ENCODE measurements at regions of chr1 and their contacts with region 1.

Region 1: DNA sequence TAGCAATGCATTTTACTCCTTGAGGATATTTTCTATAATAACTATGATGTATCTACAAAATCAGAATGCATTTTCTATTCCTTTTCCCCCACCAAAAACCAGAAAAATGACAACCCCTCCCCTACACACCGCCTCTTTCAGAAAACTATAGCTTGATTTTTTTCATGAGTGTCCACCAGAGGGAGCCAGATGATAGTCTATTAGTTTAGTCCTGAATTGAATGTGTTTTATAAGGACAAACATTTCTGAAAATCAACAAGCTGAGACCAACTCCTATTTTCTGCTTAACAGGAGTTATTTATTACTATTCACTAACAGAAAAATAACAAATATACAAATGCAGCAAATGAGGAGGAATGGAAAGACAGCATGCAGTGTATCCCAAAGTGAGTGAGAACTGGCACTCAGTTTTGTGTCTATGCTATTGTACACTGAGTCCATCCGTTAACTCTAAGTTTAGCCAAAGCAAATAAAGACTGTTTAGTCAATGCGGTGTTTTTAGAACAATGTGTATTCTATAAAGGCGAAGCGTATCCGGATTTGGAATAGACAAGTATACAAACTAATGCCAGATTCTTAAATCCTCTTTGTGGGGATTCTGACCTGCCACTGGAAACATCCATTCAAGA is 182.6 kb downstream of the VAV3 start:
- DNase-seq: peak; percentile 26
- H3K4me3 ChIP-seq: no peak overlapping the region
- H3K27ac ChIP-seq: no peak overlapping the region
- H3K4me1 ChIP-seq: no peaks in the 10 kb centered on the region
- H3K27me3 ChIP-seq: no peaks in the 10 kb centered on the region
- CTCF ChIP-seq: peak; percentile 46 to 55

Region 2: DNA sequence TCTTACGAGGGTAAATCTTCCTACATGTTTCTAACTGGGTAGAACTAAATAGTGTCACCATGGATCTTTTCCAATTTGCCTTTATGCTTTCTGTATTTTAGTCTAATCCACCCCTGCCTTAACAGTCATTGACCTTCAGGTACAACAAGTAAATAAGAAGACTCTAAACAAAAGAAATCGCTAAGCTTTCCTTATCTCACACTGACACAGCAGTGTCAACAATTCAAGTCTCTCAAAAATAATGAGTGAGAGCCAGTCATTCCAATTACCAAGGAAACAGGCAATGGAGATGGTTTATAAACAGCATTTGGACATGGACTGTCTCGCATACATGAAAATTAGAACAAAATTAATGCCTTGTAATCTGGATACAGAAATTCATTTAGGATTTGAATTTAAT is 183.1 kb before region 1 on chr1:
- CTCF ChIA-PET with region 1: no interaction called
- dilution Hi-C with region 1: no loop called
- in situ Hi-C with region 1: no loop called
- intact Hi-C with region 1: no loop called
- DNase-seq: no peak
- H3K4me3 ChIP-seq: no peak overlapping the region
- H3K27ac ChIP-seq: no peak overlapping the region
- H3K4me1 ChIP-seq: no peaks in the 10 kb centered on the region
- H3K27me3 ChIP-seq: no peaks in the 10 kb centered on the region
- CTCF ChIP-seq: no peak

Region 3: GRCh38 chr1:107963601-107964335 is 181.4 kb after region 1 on chr1:
- CTCF ChIA-PET with region 1: interaction called, 4 read pairs
- dilution Hi-C with region 1: no loop called
- in situ Hi-C with region 1: no loop called
- intact Hi-C with region 1: loop called (anchors 5 kb)
- DNase-seq: peak; percentile 21
- H3K4me3 ChIP-seq: peak overlapping the region; percentile 13 to 59 (median 56)
- H3K27ac ChIP-seq: no peak overlapping the region
- H3K4me1 ChIP-seq: peaks cover 26% of the 10 kb centered on the region
- H3K27me3 ChIP-seq: no peaks in the 10 kb centered on the region
- CTCF ChIP-seq: no peak

Region 4: GRCh38 chr1:108049178-108049819 is 267.0 kb after region 1 on chr1:
- CTCF ChIA-PET with region 1: no interaction called
- dilution Hi-C with region 1: no loop called
- in situ Hi-C with region 1: no loop called
- intact Hi-C with region 1: loop called (anchors 5 kb)
- DNase-seq: peak; percentile 12
- H3K4me3 ChIP-seq: no peak overlapping the region
- H3K27ac ChIP-seq: no peak overlapping the region
- H3K4me1 ChIP-seq: peaks cover 33% of the 10 kb centered on the region
- H3K27me3 ChIP-seq: no peaks in the 10 kb centered on the region
- CTCF ChIP-seq: peak; percentile 46 to 62

Region 5: GRCh38 chr1:108125312-108126138 is 343.2 kb after region 1 on chr1:
- CTCF ChIA-PET with region 1: interaction called, 10 read pairs
- dilution Hi-C with region 1: loop called (anchors 5 kb)
- in situ Hi-C with region 1: loop called (anchors 5 kb)
- intact Hi-C with region 1: loop called (anchors 1 kb)
- DNase-seq: peak; percentile 51
- H3K4me3 ChIP-seq: no peak overlapping the region
- H3K27ac ChIP-seq: no peak overlapping the region
- H3K4me1 ChIP-seq: no peaks in the 10 kb centered on the region
- H3K27me3 ChIP-seq: no peaks in the 10 kb centered on the region
- CTCF ChIP-seq: peak; percentile 87 to 97

Region 6: GRCh38 chr1:108199781-108200570 is 417.6 kb after region 1 on chr1 and contains the start of gene SLC25A24:
- CTCF ChIA-PET with region 1: no interaction called
- dilution Hi-C with region 1: no loop called
- in situ Hi-C with region 1: no loop called
- intact Hi-C with region 1: loop called (anchors 5 kb)
- DNase-seq: peak; percentile 73
- H3K4me3 ChIP-seq: peak within 1 kb of the TSS; percentile 92 to 99 (median 93)
- H3K27ac ChIP-seq: peak within 1 kb of the TSS; percentile 70
- H3K4me1 ChIP-seq: peaks cover 19% of the 10 kb centered on the region
- H3K27me3 ChIP-seq: no peaks in the 10 kb centered on the region
- CTCF ChIP-seq: no peak
- total RNA-seq, gene SLC25A24: 47.6 to 60.7 TPM

Region 7: DNA sequence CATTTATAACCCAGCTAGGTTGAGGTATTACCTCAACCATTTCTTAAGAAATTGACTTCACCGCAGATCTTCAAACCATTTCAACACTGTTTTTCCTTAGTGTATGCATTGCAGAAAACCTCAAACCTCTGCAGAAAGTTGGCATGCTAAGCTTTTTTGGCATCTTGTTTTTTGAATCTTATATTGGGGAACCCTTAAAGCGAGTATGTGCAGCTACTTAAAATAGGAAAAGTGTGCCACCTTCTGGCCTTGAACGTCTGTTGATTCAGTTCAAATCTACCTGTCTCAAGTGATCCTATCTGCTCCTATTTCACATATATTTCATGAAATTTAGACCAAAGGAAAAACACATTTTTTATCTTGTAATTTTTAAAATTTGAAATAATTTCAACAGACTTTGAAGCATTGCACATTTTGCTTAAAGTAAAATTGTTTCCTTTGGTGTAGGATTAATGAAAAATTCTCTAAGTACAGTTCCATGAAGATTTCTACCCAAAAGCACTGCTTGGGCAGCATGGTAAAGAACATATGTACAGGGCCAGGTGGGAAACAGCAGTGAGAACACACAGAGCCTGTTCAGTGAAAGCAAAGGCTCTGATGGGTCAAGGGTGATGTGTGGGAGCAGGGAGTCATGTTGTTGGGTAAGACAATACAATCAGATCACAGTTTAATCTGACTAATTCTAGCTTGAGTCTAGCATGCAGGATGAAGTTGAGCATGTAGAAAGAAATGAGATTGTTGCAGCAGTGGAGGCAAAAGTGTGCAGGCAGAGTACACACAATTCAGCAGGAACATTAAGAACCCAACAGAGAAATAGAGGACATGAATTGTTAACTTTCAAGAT is 861.4 kb after region 1 on chr1:
- CTCF ChIA-PET with region 1: no interaction called
- dilution Hi-C with region 1: no loop called
- in situ Hi-C with region 1: loop called in 1 of 2 experiments (anchors 25 kb)
- intact Hi-C with region 1: loop called (anchors 10 kb)
- DNase-seq: peak; percentile 46
- H3K4me3 ChIP-seq: no peak overlapping the region
- H3K27ac ChIP-seq: no peak overlapping the region
- H3K4me1 ChIP-seq: peaks cover 7% of the 10 kb centered on the region
- H3K27me3 ChIP-seq: no peaks in the 10 kb centered on the region
- CTCF ChIP-seq: peak; percentile 53 to 66

Region 8: DNA sequence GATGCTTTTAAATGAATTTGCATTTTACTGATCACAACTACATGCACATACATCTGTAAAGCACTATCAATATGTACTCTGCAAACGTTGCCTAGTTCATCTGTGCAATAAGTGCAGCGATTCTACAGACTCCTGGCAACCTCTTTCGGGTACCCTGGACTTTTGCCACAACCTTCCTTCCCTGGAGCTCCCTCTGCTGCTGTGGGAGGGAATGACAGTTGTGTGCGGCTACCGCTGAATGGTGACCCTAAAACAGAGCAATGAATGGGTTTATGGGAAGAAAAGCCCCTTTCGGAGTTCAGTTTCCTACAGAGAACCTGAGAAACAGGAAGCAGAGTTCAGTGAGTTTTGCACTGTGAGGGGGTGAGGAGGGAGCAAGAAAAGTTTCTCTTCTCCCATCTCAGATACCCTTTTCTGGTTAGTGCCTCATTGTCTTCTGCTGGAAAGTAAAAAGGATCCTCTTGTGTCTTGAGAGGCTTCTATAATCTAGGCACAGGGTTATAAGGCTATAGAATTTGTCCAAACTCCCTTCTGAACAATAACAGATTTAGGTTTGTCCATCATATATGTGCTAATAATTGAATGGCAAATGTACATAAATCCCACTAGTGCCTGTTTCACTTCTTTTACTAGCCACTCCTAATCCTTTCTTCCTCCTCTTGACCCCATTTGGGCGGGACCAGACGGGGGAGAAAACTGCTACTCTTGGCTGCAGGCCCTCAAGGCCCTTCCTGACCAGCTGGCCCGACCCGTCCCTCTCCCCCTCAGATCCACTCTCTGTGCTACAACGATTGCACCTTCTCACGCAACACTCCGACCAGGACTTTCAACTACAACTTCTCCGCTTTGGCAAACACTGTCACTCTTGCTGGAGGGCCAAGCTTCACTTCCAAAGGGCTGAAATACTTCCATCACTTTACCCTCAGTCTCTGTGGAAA is 1411.6 kb after region 1 on chr1:
- CTCF ChIA-PET with region 1: no interaction called
- dilution Hi-C with region 1: no loop called
- in situ Hi-C with region 1: no loop called
- intact Hi-C with region 1: loop called (anchors 5 kb)
- DNase-seq: no peak
- H3K4me3 ChIP-seq: no peak overlapping the region
- H3K27ac ChIP-seq: no peak overlapping the region
- H3K4me1 ChIP-seq: peaks cover 21% of the 10 kb centered on the region
- H3K27me3 ChIP-seq: no peaks in the 10 kb centered on the region
- CTCF ChIP-seq: peak; percentile 91 to 96